Activated T-helper 1 cell treated with anti-CD3 and anti-CD28 coated beads, Interleukin-12 subunit alpha, Interleukin-12 subunit beta, Interleukin-2, Interleukin-4 antibody, amounts not matched to agents 30 ng/mL and 10 ng/mL and 1 ng/mL, durations not matched to agents 14 hours and 24 hours and 36 hours (primary cell): ENCODE measurements at regions of chr12 and their contacts with region 1.

Region 1: GRCh38 chr12:2004113-2004929 is at the start of gene DCP1B:
- DNase-seq: peak; percentile 93
- H3K4me3 Mint-ChIP-seq: peak within 1 kb of the TSS; percentile 97
- H3K27ac Mint-ChIP-seq: peak within 1 kb of the TSS; percentile 95
- H3K4me1 Mint-ChIP-seq: peaks cover 31% of the 10 kb centered on the region
- H3K27me3 Mint-ChIP-seq: peaks cover 3% of the 10 kb centered on the region
- total RNA-seq, gene DCP1B: 8.8 and 9.8 TPM in 2 replicates

Region 2: GRCh38 chr12:553205-554000 is 1450.9 kb before region 1 on chr12:
- intact Hi-C with region 1: loop called (anchors 5 kb)
- DNase-seq: peak; percentile 70
- H3K4me3 Mint-ChIP-seq: peak overlapping the region; percentile 92
- H3K27ac Mint-ChIP-seq: peak overlapping the region; percentile 93
- H3K4me1 Mint-ChIP-seq: peaks cover 70% of the 10 kb centered on the region
- H3K27me3 Mint-ChIP-seq: peaks cover 4% of the 10 kb centered on the region

Region 3: GRCh38 chr12:1690578-1691122 is 313.7 kb before region 1 on chr12 and contains the start of gene ADIPOR2:
- intact Hi-C with region 1: loop called (anchors 1 kb)
- DNase-seq: peak; percentile 93
- H3K4me3 Mint-ChIP-seq: peak within 1 kb of the TSS; percentile 99
- H3K27ac Mint-ChIP-seq: peak within 1 kb of the TSS; percentile 96
- H3K4me1 Mint-ChIP-seq: peaks cover 50% of the 10 kb centered on the region
- H3K27me3 Mint-ChIP-seq: peaks cover 3% of the 10 kb centered on the region
- total RNA-seq, gene ADIPOR2: 69.4 and 75.2 TPM in 2 replicates

Region 4: DNA sequence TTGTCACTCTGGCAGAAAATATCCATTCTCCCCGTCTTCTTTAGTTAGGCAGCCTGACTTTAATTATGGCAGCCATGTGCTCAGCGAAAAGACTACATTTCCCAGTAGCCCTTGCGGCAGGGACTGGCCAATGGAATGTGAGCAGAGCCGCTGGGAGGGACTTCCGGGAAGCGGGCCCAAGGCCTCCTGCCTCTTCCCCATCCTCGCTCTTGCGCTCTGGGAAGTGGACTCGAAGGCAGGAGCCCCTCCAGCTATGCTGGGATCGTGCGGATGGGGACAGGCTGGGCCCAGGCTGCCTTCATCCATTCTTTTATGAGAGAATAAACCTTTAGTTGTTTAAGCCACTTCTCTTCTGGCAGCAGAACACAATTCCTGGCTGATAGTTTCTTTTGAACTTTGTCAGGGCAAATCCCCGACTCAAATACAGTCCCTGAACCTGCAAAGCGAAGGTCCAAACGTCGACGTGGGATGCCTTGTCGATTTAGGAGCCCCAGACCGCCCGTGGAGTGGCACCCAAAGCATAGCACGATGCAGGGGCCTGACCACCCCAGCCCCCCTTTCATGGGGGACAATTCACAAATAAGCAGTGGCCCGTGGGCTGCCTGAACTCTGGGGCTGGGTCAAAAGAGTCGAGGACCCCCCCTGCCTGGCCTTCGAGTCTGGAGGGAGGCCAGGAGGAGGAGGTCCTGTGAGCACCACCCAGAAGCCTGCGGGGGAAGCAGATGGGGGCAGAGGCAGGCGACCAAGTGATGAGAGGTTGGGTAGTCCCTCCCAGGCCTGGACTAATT is 199.6 kb before region 1 on chr12:
- intact Hi-C with region 1: loop called (anchors 2 kb)
- DNase-seq: peak; percentile 80
- H3K4me3 Mint-ChIP-seq: no peak overlapping the region
- H3K27ac Mint-ChIP-seq: peak overlapping the region; percentile 18
- H3K4me1 Mint-ChIP-seq: peaks cover 7% of the 10 kb centered on the region
- H3K27me3 Mint-ChIP-seq: peaks cover 2% of the 10 kb centered on the region

Region 5: GRCh38 chr12:1972856-1973317 is 31.4 kb before region 1 on chr12:
- intact Hi-C with region 1: no loop called
- DNase-seq: no peak
- H3K4me3 Mint-ChIP-seq: no peak overlapping the region
- H3K27ac Mint-ChIP-seq: no peak overlapping the region
- H3K4me1 Mint-ChIP-seq: no peaks in the 10 kb centered on the region
- H3K27me3 Mint-ChIP-seq: no peaks in the 10 kb centered on the region

Region 6: GRCh38 chr12:2034633-2035430 is 30.5 kb after region 1 on chr12:
- intact Hi-C with region 1: loop called (anchors 1 kb)
- DNase-seq: peak; percentile 78
- H3K4me3 Mint-ChIP-seq: peak overlapping the region; percentile 53
- H3K27ac Mint-ChIP-seq: no peak overlapping the region
- H3K4me1 Mint-ChIP-seq: peaks cover 14% of the 10 kb centered on the region
- H3K27me3 Mint-ChIP-seq: peaks cover 52% of the 10 kb centered on the region